CD8-positive, alpha-beta T cell (primary cell): ENCODE measurements at regions of chr22 and their contacts with region 1.

Region 1: GRCh38 chr22:30005213-30005857 is 74.9 kb upstream of the HORMAD2 start:
- DNase-seq: peak; percentile 29 to 75 (median 61)
- ATAC-seq: peak; percentile 69
- H3K4me3 ChIP-seq: no peak overlapping the region
- H3K4me3 Mint-ChIP-seq: no peak overlapping the region
- H3K27ac ChIP-seq: no peak overlapping the region
- H3K27ac Mint-ChIP-seq: no peak overlapping the region
- H3K4me1 ChIP-seq: no peaks in the 10 kb centered on the region
- H3K4me1 Mint-ChIP-seq: peaks cover 11% of the 10 kb centered on the region
- H3K27me3 ChIP-seq: no peaks in the 10 kb centered on the region
- H3K27me3 Mint-ChIP-seq: no peaks in the 10 kb centered on the region
- CTCF ChIP-seq: peak; percentile 94

Region 2: DNA sequence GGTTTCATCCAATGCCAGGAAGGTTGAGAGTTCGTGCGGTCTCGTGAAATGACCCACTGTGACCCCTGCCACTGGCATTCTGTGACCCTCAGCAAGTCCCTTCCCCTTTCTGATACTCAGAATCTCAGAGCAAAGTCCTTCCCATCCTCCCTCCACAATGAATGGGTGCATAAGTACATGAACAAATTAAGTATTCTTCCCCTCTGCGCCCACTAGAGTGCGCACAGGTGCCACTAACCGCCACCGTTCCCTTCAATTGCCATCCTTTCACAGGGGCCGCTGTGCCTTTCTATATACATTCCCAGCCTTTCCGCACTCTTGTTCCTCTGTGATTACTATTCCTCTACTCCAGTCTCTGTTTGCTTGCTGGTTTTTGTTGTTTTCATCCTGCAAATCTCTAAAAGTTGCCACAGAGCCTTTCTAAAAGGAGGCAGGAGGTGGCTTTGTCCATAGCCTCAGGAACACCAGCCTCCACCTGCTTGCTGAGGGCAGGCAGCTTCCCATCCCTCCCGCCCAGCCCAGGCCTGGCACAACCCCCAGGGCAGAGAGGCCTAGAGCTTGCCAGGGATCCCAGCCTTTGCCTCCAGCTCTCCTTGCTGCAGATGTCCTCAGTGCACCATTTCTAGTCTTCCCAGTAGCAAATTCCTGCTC is 610.3 kb before region 1 on chr22:
- CTCF ChIA-PET with region 1: interaction called, 8 read pairs
- POLR2A ChIA-PET with region 1: no interaction called
- intact Hi-C with region 1: loop called (anchors 1 to 2 kb)
- DNase-seq: peak; percentile 41 to 82 (median 64)
- ATAC-seq: peak; percentile 97
- H3K4me3 ChIP-seq: no peak overlapping the region
- H3K4me3 Mint-ChIP-seq: no peak overlapping the region
- H3K27ac ChIP-seq: no peak overlapping the region
- H3K27ac Mint-ChIP-seq: no peak overlapping the region
- H3K4me1 ChIP-seq: no peaks in the 10 kb centered on the region
- H3K4me1 Mint-ChIP-seq: peaks cover 6% of the 10 kb centered on the region
- H3K27me3 ChIP-seq: no peaks in the 10 kb centered on the region
- H3K27me3 Mint-ChIP-seq: peaks cover 2% of the 10 kb centered on the region
- CTCF ChIP-seq: peak; percentile 75

Region 3: DNA sequence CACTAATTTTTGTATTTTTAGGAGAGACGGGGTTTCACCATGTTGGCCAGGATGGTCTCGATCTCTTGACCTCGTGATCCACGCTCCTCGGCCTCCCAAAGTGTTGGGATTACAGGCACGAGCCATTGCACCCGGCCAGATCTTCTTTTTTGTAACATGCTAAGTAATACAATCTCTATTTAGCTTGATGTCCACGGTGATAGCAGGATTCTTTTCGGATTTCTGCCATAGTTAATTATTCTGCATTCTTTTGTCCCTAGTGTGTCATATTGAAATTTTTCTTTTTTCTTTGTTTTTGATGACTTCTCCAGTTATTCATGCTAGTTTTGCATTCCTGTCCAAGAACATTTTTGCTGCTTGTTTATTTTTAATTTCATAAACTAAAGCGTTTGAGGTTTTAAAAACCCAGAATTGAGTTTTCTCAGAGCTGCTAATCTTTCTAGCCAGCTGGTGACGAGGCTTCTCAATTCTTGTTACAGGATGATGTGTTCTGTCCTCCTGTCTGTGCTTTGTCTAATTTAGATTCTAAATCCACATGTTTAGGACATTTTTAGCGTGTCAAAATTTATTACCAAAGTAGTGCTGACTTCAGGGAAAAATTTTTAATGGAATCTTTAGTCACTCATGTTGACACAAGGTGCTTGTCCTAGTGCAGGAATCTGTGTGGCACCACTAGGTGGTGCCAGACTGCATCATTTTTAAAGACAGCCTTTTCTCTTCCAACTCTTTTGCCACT is 380.1 kb before region 1 on chr22:
- CTCF ChIA-PET with region 1: interaction called, 14 read pairs
- POLR2A ChIA-PET with region 1: interaction called, 3 read pairs
- intact Hi-C with region 1: no loop called
- DNase-seq: peak in 6 of 9 experiments; percentile 11 to 66 (median 29)
- ATAC-seq: no peak
- H3K4me3 ChIP-seq: no peak overlapping the region
- H3K4me3 Mint-ChIP-seq: no peak overlapping the region
- H3K27ac ChIP-seq: no peak overlapping the region
- H3K27ac Mint-ChIP-seq: no peak overlapping the region
- H3K4me1 ChIP-seq: peaks cover 25% of the 10 kb centered on the region
- H3K4me1 Mint-ChIP-seq: peaks cover 64% of the 10 kb centered on the region
- H3K27me3 ChIP-seq: no peaks in the 10 kb centered on the region
- H3K27me3 Mint-ChIP-seq: no peaks in the 10 kb centered on the region
- CTCF ChIP-seq: peak; percentile 86

Region 4: GRCh38 chr22:29689880-29690213 is 315.5 kb before region 1 on chr22:
- CTCF ChIA-PET with region 1: interaction called, 11 read pairs
- POLR2A ChIA-PET with region 1: no interaction called
- intact Hi-C with region 1: loop called (anchors 2 to 10 kb)
- DNase-seq: peak in 4 of 9 experiments; percentile 16 to 35 (median 29)
- ATAC-seq: no peak
- H3K4me3 ChIP-seq: no peak overlapping the region
- H3K4me3 Mint-ChIP-seq: no peak overlapping the region
- H3K27ac ChIP-seq: no peak overlapping the region
- H3K27ac Mint-ChIP-seq: no peak overlapping the region
- H3K4me1 ChIP-seq: no peaks in the 10 kb centered on the region
- H3K4me1 Mint-ChIP-seq: no peaks in the 10 kb centered on the region
- H3K27me3 ChIP-seq: no peaks in the 10 kb centered on the region
- H3K27me3 Mint-ChIP-seq: no peaks in the 10 kb centered on the region
- CTCF ChIP-seq: no peak

Region 5: DNA sequence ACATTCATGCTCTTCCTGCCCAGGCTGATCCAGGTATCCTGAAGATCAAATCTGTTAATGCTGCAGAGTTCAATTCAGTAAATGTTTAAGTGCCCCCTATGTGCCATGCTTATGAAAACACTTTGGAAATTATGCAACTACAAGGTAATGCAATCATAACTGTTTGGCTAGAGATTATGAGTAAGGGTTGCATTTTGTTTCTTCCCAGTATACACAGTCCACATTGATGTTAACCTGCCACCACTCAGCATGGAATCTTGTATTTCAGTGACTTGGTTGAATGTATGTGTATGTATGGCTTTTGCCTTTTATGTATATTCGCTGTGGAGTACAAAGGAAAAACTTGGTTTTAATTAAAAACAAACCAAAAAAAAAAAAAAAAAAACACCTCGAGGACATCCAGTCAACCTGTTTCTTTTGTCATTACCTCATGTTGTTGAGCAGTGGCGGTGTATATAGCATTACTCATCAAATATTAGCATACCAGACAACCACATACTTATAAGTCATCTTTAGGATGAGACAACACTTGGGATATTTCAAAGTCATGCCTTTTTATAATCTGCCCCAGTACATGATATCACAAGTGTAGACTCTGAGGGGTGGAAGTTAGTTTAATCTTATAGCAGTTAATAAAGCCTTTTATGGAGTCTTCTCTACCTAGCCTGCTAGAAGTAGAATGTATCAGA is 11.2 kb before region 1 on chr22:
- CTCF ChIA-PET with region 1: interaction called, 31 read pairs
- POLR2A ChIA-PET with region 1: no interaction called
- intact Hi-C with region 1: no loop called
- DNase-seq: no peak
- ATAC-seq: peak; percentile 34
- H3K4me3 ChIP-seq: no peak overlapping the region
- H3K4me3 Mint-ChIP-seq: no peak overlapping the region
- H3K27ac ChIP-seq: no peak overlapping the region
- H3K27ac Mint-ChIP-seq: no peak overlapping the region
- H3K4me1 ChIP-seq: no peaks in the 10 kb centered on the region
- H3K4me1 Mint-ChIP-seq: peaks cover 2% of the 10 kb centered on the region
- H3K27me3 ChIP-seq: no peaks in the 10 kb centered on the region
- H3K27me3 Mint-ChIP-seq: no peaks in the 10 kb centered on the region
- CTCF ChIP-seq: no peak

Region 6: GRCh38 chr22:30027169-30027568 is 21.8 kb after region 1 on chr22:
- CTCF ChIA-PET with region 1: interaction called, 10 read pairs
- POLR2A ChIA-PET with region 1: no interaction called
- intact Hi-C with region 1: no loop called
- DNase-seq: no peak
- ATAC-seq: no peak
- H3K4me3 ChIP-seq: no peak overlapping the region
- H3K4me3 Mint-ChIP-seq: no peak overlapping the region
- H3K27ac ChIP-seq: no peak overlapping the region
- H3K27ac Mint-ChIP-seq: no peak overlapping the region
- H3K4me1 ChIP-seq: no peaks in the 10 kb centered on the region
- H3K4me1 Mint-ChIP-seq: no peaks in the 10 kb centered on the region
- H3K27me3 ChIP-seq: no peaks in the 10 kb centered on the region
- H3K27me3 Mint-ChIP-seq: no peaks in the 10 kb centered on the region
- CTCF ChIP-seq: no peak

Region 7: GRCh38 chr22:30140414-30140813 is 135.1 kb after region 1 on chr22:
- CTCF ChIA-PET with region 1: no interaction called
- POLR2A ChIA-PET with region 1: no interaction called
- intact Hi-C with region 1: no loop called
- DNase-seq: no peak
- ATAC-seq: no peak
- H3K4me3 ChIP-seq: no peak overlapping the region
- H3K4me3 Mint-ChIP-seq: no peak overlapping the region
- H3K27ac ChIP-seq: no peak overlapping the region
- H3K27ac Mint-ChIP-seq: no peak overlapping the region
- H3K4me1 ChIP-seq: no peaks in the 10 kb centered on the region
- H3K4me1 Mint-ChIP-seq: no peaks in the 10 kb centered on the region
- H3K27me3 ChIP-seq: peaks cover 0 to 4% of the 10 kb centered on the region in 2 experiments
- H3K27me3 Mint-ChIP-seq: no peaks in the 10 kb centered on the region
- CTCF ChIP-seq: no peak